Lower leg skin (tissue), 4 donors: ENCODE measurements at regions of chr1 and their contacts with region 1.

Region 1: DNA sequence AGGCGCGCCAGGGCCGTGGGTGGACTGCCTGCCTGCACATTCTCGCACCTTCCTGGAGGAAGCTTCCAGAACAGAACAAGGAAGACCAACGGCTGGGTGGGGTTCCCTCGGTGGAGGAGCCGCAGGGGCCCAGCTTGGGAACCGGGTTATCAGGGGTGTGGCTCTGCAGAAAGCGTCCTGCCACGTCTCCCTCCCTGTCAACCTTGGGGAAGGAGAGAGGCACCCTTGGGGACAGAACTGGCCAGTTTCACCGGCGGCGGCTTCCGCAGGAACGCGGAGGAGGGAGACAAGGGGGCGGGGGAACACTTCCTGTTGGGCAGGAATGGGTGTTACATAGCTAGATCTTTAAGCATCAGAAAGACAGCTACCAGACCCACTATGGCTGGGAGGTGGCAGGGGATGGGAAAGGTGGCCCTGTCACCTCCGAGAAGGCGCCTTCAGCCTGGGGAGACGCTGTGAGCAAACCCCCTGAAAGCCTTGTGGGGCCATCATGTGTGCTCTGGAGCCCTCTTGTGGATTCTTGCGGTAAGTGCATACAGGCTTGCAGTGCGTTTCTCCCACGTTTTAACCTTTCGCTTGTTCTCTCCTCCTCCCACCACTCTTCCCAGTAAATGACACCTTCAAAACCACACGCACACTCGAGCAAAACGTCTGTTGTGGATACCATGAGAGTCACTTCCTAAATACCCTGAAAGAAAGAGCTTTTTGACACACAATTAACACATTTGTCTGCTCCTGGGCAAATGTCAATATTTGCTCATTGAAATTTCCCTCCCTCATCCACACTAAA is 3.8 kb upstream of the PLEKHA6 start:
- DNase-seq: peak; percentile 66 to 94
- H3K4me3 ChIP-seq: no peak overlapping the region
- CTCF ChIP-seq: peak in 1 of 3 donors; percentile 97
- POLR2A ChIP-seq: no peak

Region 2: GRCh38 chr1:204162231-204163074 is 201.1 kb before region 1 on chr1:
- intact Hi-C with region 1: loop called (anchors 5 kb)
- DNase-seq: peak; percentile 76 to 96
- H3K4me3 ChIP-seq: no peak overlapping the region
- CTCF ChIP-seq: peak in 1 of 3 donors; percentile 89
- POLR2A ChIP-seq: no peak

Region 3: DNA sequence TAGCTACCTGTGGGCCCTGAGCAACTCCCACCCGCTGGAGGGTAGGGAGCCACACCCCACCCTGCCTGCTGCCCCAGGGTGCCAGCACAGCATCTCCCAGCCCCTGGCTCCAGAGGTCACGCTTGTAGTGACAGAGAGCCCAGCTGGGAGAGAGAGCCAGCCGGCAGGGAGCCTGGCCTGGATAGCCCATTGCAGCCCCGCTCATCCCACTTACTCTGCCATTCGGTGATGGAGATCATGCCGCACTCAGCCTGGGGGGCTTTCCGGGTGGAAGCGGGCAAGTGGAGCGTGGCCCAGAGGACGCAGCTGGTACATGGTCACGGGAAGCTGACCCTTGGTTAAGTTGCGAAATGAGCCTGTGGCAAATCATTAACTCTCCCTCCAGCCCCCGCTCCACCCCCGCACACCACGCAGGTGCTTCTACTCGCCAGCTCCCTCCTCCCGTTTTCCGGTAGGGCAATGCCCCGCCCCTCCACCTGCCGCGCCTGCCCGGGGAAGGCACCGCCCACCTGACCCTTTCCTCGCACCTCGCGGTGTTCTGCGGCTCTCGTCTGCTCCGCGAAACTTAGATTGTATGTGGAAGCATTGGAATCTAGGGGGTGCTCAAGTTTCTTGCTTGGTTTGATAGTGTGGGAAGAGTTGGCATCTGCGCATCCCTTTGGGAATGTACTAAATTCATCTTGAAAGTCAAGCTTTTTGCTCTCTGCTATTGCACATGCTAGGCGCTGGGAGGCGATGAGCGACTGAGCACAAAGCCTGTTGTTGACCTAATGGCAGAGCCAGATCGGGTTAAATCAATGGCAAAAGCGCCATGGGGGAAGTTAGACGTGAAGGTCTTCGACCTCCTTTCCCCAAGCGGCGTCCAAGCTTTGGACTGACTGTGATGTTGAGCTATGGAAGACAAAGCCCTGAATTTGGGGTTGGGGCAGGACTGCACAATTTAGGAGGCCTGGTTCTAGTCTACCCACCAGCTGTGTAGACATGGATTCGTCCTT is 149.6 kb before region 1 on chr1 and contains the start of gene GOLT1A:
- intact Hi-C with region 1: loop called (anchors 10 kb)
- DNase-seq: peak; percentile 38 to 89
- H3K4me3 ChIP-seq: no peak within 1 kb of the TSS
- CTCF ChIP-seq: no peak
- POLR2A ChIP-seq: no peak
- total RNA-seq, gene GOLT1A: 0.91 to 1.5 TPM in 2 of 4 donors, not detected in the others

Region 4: DNA sequence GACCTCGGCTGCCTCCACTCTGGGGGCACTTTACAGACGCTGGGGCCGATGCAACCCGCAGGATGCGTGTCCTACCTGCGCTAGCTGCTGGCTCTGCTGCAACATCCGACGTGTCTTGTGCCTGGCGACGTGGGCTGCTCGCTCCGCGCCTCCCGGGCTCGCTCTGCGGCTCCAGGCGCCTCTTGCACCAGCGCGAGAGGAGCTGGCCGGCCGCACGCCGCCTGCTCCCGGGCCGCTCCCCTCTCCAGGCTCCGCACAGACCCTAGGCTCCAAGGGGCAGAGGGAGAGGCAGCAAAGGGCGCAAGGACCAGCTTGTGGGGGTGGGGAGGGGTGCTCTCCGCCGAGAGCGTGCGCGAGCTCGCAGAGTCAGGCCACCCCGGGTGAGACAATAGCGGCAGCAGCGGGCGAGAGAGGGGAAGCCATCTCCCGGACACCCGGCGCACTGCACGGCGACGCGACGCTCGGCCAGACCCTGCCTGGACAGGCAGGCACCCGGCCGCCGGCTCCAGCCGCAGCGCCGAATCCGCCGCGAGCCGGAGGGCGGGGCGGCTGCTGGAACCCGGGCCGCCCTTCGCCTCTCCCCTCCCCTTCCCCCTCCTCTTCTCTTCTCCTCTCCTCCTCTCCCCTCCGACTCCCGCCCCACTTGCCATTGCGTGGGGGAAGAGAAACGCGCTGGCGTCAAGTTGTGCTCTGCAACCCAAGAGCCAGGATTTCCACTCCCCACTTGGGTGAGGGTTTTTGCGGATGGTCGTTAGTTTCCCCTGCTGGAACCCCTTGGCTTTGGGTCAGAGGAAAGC is 130.9 kb after region 1 on chr1 and contains the start of gene PIK3C2B:
- intact Hi-C with region 1: no loop called
- DNase-seq: peak; percentile 62 to 95
- H3K4me3 ChIP-seq: peak within 1 kb of the TSS; percentile 75
- CTCF ChIP-seq: peak in 1 of 3 donors; percentile 33
- POLR2A ChIP-seq: no peak
- total RNA-seq, gene PIK3C2B: 51.7 to 92.1 (median 62.1) TPM